ENCODE measurements at regions of chr1 and their contacts with region 1.

Region 1: DNA sequence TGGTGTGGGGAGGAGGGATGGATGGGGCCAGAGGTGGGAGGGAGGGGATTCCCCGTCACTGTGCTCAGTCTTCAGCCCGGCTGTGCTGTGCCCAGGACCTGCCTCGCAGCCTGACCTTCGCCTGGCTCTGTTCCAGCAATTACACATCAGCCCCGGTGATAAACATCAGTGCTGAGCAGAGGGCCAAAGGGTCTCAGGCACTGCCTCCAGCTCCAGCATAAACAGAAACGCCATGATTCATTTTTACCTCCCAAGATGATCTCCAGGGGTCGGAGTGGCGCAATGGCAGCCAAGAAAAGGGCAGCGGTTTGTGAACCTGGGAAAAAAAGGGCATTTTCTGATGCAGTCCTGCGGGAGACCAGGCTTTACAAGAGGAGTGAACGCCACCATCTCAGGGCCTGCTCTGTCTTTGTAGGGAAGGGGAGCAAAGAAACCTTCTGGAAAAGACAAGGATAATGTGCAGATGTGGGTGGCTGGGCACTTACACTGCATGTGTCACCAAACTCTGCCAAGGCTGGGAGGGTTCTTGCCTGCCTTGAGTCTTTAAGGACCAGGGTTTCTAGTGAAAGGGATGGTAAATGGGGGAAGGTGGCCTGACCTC is 28.1 kb downstream of the SHISA4 start:
- DNase-seq: peak; percentile 74 to 82
- H3K4me3 ChIP-seq: no peak overlapping the region
- H3K27ac ChIP-seq: peak overlapping the region; percentile 57
- H3K4me1 ChIP-seq: peaks cover 38% of the 10 kb centered on the region
- H3K27me3 ChIP-seq: no peaks in the 10 kb centered on the region
- CTCF ChIP-seq: no peak

Region 2: DNA sequence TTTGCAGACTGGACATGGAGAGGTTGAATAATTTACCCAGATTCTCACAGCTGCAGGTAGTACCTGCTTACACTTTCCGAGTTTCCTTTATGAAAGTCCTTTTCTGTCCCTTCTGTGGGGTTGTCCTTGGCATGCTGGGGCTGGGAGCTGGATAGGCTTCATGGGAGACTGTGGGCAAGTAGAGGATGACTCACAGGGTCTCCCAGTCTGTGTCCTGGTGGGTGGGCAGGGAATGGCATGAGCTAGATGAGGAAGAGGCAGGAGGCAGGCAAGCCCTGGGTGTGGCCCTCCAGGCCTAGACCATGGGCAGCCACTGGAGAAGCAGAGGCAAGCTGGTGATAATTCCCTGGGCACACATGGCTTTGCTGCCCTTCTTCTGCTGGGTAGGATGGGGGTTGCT is 297.2 kb before region 1 on chr1:
- CTCF ChIA-PET with region 1: no interaction called
- POLR2A ChIA-PET with region 1: no interaction called
- intact Hi-C with region 1: no loop called
- DNase-seq: peak in 1 of 2 experiments; percentile 8
- H3K4me3 ChIP-seq: no peak overlapping the region
- H3K27ac ChIP-seq: no peak overlapping the region
- H3K4me1 ChIP-seq: no peaks in the 10 kb centered on the region
- H3K27me3 ChIP-seq: no peaks in the 10 kb centered on the region
- CTCF ChIP-seq: no peak

Region 3: GRCh38 chr1:201937624-201938213 is 21.0 kb after region 1 on chr1:
- CTCF ChIA-PET with region 1: interaction called, 4 read pairs
- POLR2A ChIA-PET with region 1: no interaction called
- intact Hi-C with region 1: loop called (anchors 1 kb)
- DNase-seq: peak in 1 of 2 experiments; percentile 52
- H3K4me3 ChIP-seq: no peak overlapping the region
- H3K27ac ChIP-seq: peak overlapping the region; percentile 62
- H3K4me1 ChIP-seq: peaks cover 27% of the 10 kb centered on the region
- H3K27me3 ChIP-seq: no peaks in the 10 kb centered on the region
- CTCF ChIP-seq: no peak

Region 4: GRCh38 chr1:201946224-201946908 is 29.6 kb after region 1 on chr1 and contains the start of gene LMOD1:
- CTCF ChIA-PET with region 1: no interaction called
- POLR2A ChIA-PET with region 1: no interaction called
- intact Hi-C with region 1: loop called (anchors 2 kb)
- DNase-seq: peak in 1 of 2 experiments; percentile 79
- H3K4me3 ChIP-seq: no peak within 1 kb of the TSS
- H3K27ac ChIP-seq: no peak within 1 kb of the TSS
- H3K4me1 ChIP-seq: peaks cover 14% of the 10 kb centered on the region
- H3K27me3 ChIP-seq: peaks cover 26% of the 10 kb centered on the region
- CTCF ChIP-seq: no peak
- total RNA-seq, gene LMOD1: 0.53 and 0.74 TPM in 2 replicates

Region 5: GRCh38 chr1:201955009-201955728 is 38.4 kb after region 1 on chr1 and contains the start of gene TIMM17A:
- CTCF ChIA-PET with region 1: interaction called, 11 read pairs
- POLR2A ChIA-PET with region 1: interaction called, 13 read pairs
- intact Hi-C with region 1: no loop called
- DNase-seq: peak; percentile 95
- H3K4me3 ChIP-seq: peak within 1 kb of the TSS; percentile 92
- H3K27ac ChIP-seq: peak within 1 kb of the TSS; percentile 83
- H3K4me1 ChIP-seq: peaks cover 10% of the 10 kb centered on the region; the same call in 1 of the 2 replicates
- H3K27me3 ChIP-seq: no peaks in the 10 kb centered on the region
- CTCF ChIP-seq: no peak
- total RNA-seq, gene TIMM17A: 55.7 and 60.4 TPM in 2 replicates

Measured in PC-9 (cell line).